Activated CD4-positive, alpha-beta T cell treated with anti-CD3 and anti-CD28 coated beads, Interleukin-2, amount 10 ng/mL, durations not matched to agents 24 days and 14 days (primary cell): ENCODE measurements at regions of chr12 and their contacts with region 1.

Region 1: GRCh38 chr12:53321074-53321814 is at the start of gene AAAS:
- DNase-seq: peak; percentile 99
- H3K4me3 Mint-ChIP-seq: peak within 1 kb of the TSS; percentile 98
- H3K27ac Mint-ChIP-seq: peak within 1 kb of the TSS; percentile 96
- H3K4me1 Mint-ChIP-seq: peaks cover 39% of the 10 kb centered on the region
- H3K27me3 Mint-ChIP-seq: no peaks in the 10 kb centered on the region
- total RNA-seq, gene AAAS: 86.7 and 91.1 TPM in 2 replicates

Region 2: GRCh38 chr12:53159195-53159839 is 161.9 kb before region 1 on chr12:
- intact Hi-C with region 1: loop called (anchors 1 kb)
- DNase-seq: peak; percentile 97
- H3K4me3 Mint-ChIP-seq: peak overlapping the region; percentile 8
- H3K27ac Mint-ChIP-seq: peak overlapping the region; percentile 38
- H3K4me1 Mint-ChIP-seq: peaks cover 9% of the 10 kb centered on the region
- H3K27me3 Mint-ChIP-seq: no peaks in the 10 kb centered on the region

Region 3: GRCh38 chr12:53220801-53221202 is 100.4 kb before region 1 on chr12:
- intact Hi-C with region 1: loop called (anchors 1 kb)
- DNase-seq: peak; percentile 96
- H3K4me3 Mint-ChIP-seq: peak overlapping the region; percentile 97
- H3K27ac Mint-ChIP-seq: peak overlapping the region; percentile 90
- H3K4me1 Mint-ChIP-seq: peaks cover 82% of the 10 kb centered on the region
- H3K27me3 Mint-ChIP-seq: peaks cover 1% of the 10 kb centered on the region

Region 4: GRCh38 chr12:53344824-53345485 is 23.7 kb after region 1 on chr12:
- intact Hi-C with region 1: loop called (anchors 1 kb)
- DNase-seq: peak; percentile 89
- H3K4me3 Mint-ChIP-seq: peak overlapping the region; percentile 92
- H3K27ac Mint-ChIP-seq: peak overlapping the region; percentile 90
- H3K4me1 Mint-ChIP-seq: peaks cover 24% of the 10 kb centered on the region
- H3K27me3 Mint-ChIP-seq: peaks cover 5% of the 10 kb centered on the region

Region 5: DNA sequence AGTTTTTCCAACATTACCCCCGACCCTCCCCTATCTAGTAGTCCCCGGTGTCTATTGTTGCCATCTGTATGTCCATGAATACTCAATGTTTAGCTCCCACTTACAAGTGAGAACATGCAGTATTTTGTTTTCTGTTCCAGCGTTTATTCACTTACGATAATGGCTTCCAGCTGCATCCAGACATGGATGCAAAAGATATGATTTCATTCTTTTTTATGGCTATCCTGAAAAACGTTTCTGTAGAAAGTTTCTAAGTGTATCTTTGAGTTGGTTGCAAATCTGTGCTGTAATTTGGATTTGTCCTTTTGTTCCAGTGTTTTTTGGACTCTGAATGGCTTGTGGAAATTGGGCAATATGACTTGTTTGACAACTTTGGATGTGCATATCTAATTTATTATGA is 70.5 kb after region 1 on chr12:
- intact Hi-C with region 1: no loop called
- DNase-seq: no peak
- H3K4me3 Mint-ChIP-seq: no peak overlapping the region
- H3K27ac Mint-ChIP-seq: no peak overlapping the region
- H3K4me1 Mint-ChIP-seq: peaks cover 34% of the 10 kb centered on the region
- H3K27me3 Mint-ChIP-seq: no peaks in the 10 kb centered on the region

Region 6: DNA sequence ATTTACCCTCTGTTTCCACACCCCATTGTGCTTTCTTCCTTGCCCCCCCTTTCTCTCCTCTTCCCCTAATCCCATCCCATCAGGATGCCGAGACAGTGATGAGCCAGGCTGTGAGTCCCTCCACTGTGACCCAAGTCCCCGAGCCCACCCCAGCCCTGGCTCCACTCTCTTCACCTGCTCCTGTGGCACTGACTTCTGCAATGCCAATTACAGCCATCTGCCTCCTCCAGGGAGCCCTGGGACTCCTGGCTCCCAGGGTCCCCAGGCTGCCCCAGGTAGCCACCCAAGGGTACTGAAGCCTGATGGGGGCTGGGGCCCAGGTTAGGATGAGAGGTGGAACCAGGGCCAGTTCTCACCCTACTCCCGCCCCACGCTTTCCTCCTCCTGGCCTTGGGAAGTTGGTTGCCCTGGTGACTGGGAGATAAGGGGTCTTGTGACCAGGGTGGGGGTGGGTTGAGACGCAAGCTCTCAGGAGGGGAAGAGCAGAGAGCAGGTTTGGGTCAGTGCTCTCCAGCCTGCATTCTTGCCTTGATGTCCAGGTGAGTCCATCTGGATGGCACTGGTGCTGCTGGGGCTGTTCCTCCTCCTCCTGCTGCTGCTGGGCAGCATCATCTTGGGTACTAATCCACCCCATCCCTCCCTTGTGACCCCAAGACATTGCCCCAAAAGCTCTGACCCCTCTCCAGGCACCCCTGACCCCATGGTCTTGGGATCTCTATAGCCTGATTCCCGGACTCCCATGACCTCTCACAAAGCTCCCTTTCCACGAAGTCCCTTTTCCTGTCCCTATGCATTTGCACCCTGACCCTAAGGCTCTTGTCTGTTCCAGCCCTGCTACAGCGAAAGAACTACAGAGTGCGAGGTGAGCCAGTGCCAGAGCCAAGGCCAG is 103.6 kb after region 1 on chr12:
- intact Hi-C with region 1: loop called (anchors 1 kb)
- DNase-seq: no peak
- H3K4me3 Mint-ChIP-seq: no peak overlapping the region
- H3K27ac Mint-ChIP-seq: no peak overlapping the region
- H3K4me1 Mint-ChIP-seq: peaks cover 11% of the 10 kb centered on the region
- H3K27me3 Mint-ChIP-seq: no peaks in the 10 kb centered on the region

Region 7: GRCh38 chr12:53500776-53501614 is 179.8 kb after region 1 on chr12 and contains the start of gene TARBP2:
- intact Hi-C with region 1: loop called (anchors 1 kb)
- DNase-seq: peak; percentile 98
- H3K4me3 Mint-ChIP-seq: peak within 1 kb of the TSS; percentile 93
- H3K27ac Mint-ChIP-seq: peak within 1 kb of the TSS; percentile 97
- H3K4me1 Mint-ChIP-seq: peaks cover 35% of the 10 kb centered on the region
- H3K27me3 Mint-ChIP-seq: no peaks in the 10 kb centered on the region
- total RNA-seq, gene TARBP2: 49.7 and 52.2 TPM in 2 replicates

Region 8: GRCh38 chr12:54689984-54690383 is 1368.7 kb after region 1 on chr12:
- intact Hi-C with region 1: no loop called
- DNase-seq: peak; percentile 49
- H3K4me3 Mint-ChIP-seq: no peak overlapping the region
- H3K27ac Mint-ChIP-seq: no peak overlapping the region
- H3K4me1 Mint-ChIP-seq: no peaks in the 10 kb centered on the region
- H3K27me3 Mint-ChIP-seq: peaks cover 37% of the 10 kb centered on the region